Cardiac septum (tissue), 1 donor: ENCODE measurements at regions of chr18 and their contacts with region 1.

Region 1: DNA sequence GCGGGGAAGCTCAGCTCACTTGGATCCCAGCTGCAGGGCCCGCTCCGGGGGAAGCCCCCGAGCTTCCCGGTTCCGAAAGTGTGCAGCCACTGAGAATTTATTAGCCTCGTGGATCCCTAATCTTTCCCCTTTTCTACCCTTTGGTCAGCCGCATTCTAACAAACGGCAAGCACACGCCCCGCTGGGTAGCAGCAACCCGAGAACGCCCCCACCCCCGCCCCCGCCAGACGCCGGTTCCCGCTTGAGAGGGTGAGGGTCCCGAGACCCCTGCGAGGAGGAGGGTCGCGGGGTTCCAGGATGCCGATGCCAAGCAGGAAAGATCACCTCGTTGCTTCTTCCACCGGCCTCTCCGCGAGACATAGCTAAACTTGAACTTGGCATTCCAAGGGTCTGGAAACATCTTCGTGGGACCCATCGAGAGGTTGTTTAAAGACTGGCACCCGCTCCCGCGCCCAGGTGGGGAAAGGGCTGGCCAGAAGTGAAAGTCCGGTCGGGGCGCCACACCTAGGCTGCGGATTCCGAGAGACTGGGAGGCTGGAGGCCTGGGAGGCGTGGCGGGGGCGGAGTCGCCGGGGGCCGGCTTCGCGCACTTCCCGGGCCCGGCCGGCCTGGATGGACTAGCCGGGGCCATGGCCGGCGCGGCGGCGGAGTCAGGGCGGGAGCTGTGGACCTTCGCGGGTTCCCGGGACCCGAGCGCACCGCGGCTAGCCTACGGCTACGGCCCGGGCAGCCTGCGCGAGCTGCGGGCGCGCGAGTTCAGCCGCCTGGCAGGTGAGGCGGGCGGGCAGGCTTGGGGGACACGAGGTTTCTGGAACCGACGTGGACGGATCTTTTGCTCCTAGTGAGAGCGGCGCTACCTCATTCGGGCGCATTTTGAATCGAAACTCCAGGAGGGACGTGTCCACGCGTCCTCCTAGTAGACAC is at the start of gene MOCOS:
- DNase-seq: peak; percentile 85
- total RNA-seq, gene MOCOS: 0.38 TPM

Region 2: DNA sequence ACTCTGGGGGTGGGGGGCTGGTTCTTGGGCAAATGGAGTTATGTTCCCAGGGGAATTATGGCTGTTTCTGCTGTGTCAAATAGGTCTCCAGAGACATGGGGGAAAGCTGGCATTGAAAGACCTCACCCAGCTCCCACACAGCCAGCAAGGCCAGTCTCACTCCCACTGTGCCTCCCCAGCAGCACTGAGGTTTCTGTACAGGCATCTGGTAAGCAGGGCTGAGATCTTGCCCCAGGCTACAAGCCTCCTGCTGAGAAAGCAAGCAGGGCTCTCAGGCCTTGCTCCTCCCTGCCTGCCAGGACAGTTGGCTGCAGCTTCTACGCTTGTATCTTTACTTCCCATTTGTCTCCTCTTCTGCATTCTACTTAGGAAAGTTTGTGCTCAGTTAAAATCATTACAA is 59.9 kb after region 1 on chr18:
- intact Hi-C with region 1: no loop called
- DNase-seq: no peak

Region 3: GRCh38 chr18:36265015-36265414 is 77.8 kb after region 1 on chr18:
- intact Hi-C with region 1: no loop called
- DNase-seq: no peak

Region 4: GRCh38 chr18:36432880-36433279 is 245.7 kb after region 1 on chr18:
- intact Hi-C with region 1: loop called (anchors 10 kb)
- DNase-seq: no peak

Region 5: GRCh38 chr18:36501100-36501499 is 313.9 kb after region 1 on chr18:
- intact Hi-C with region 1: no loop called
- DNase-seq: no peak

Region 6: DNA sequence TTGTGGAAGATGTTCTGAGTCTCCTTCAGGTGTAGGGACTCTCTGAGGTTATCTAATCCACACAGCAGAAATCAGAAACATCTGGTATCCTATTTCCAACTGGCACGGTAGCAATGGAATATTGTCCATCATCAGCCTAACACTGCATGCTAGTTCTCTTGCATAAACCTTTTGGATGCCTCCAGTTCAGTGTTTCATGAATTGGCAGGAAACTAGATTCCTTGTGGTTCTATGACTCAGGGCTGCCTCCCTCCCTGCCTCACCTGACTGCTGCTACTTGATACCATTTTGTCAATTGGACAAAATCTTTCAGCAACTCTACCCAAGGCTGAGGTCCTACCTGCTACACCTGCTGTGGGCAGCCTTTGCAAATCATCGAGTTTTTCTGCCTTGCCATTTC is 510.7 kb after region 1 on chr18:
- intact Hi-C with region 1: no loop called
- DNase-seq: no peak